ENCODE measurements at regions of chr1 and their contacts with region 1.

Region 1: GRCh38 chr1:84133479-84133878 is 10.6 kb upstream of the PRKACB start:
- DNase-seq: no peak
- ATAC-seq: no peak
- H3K4me3 ChIP-seq: no peak overlapping the region
- H3K27ac ChIP-seq: no peak overlapping the region
- H3K4me1 ChIP-seq: no peaks in the 10 kb centered on the region
- H3K27me3 ChIP-seq: no peaks in the 10 kb centered on the region
- CTCF ChIP-seq: no peak
- POLR2A ChIP-seq: no peak

Region 2: GRCh38 chr1:84433258-84434080 is 300.0 kb after region 1 on chr1:
- intact Hi-C with region 1: loop called (anchors 5 kb)
- DNase-seq: peak; percentile 55 to 79 (median 64)
- ATAC-seq: peak; percentile 92
- H3K4me3 ChIP-seq: no peak overlapping the region
- H3K27ac ChIP-seq: peak overlapping the region in 1 of 4 donors; percentile 30
- H3K4me1 ChIP-seq: peaks cover 3% of the 10 kb centered on the region
- H3K27me3 ChIP-seq: no peaks in the 10 kb centered on the region
- CTCF ChIP-seq: peak; percentile 53 to 91 (median 89)
- POLR2A ChIP-seq: no peak

Region 3: GRCh38 chr1:84620720-84621313 is 487.3 kb after region 1 on chr1:
- intact Hi-C with region 1: loop called (anchors 10 kb)
- DNase-seq: peak; percentile 71 to 77 (median 77)
- ATAC-seq: peak; percentile 93
- H3K4me3 ChIP-seq: peak overlapping the region; percentile 14 to 45
- H3K27ac ChIP-seq: peak overlapping the region in 3 of 4 donors; percentile 50 to 78 (median 57)
- H3K4me1 ChIP-seq: peaks cover 12% of the 10 kb centered on the region
- H3K27me3 ChIP-seq: no peaks in the 10 kb centered on the region
- CTCF ChIP-seq: peak; percentile 80 to 99 (median 97)
- POLR2A ChIP-seq: peak; percentile 23 to 38 (median 27)

Region 4: GRCh38 chr1:84763912-84764663 is 630.6 kb after region 1 on chr1:
- intact Hi-C with region 1: loop called (anchors 10 kb)
- DNase-seq: no peak
- ATAC-seq: no peak
- H3K4me3 ChIP-seq: no peak overlapping the region
- H3K27ac ChIP-seq: no peak overlapping the region
- H3K4me1 ChIP-seq: peaks cover 14% of the 10 kb centered on the region
- H3K27me3 ChIP-seq: no peaks in the 10 kb centered on the region
- CTCF ChIP-seq: no peak
- POLR2A ChIP-seq: no peak

Measured in body of pancreas (tissue), 4 donors.